HEK293 (cell line): ENCODE measurements at regions of chr2 and their contacts with region 1.

Region 1: DNA sequence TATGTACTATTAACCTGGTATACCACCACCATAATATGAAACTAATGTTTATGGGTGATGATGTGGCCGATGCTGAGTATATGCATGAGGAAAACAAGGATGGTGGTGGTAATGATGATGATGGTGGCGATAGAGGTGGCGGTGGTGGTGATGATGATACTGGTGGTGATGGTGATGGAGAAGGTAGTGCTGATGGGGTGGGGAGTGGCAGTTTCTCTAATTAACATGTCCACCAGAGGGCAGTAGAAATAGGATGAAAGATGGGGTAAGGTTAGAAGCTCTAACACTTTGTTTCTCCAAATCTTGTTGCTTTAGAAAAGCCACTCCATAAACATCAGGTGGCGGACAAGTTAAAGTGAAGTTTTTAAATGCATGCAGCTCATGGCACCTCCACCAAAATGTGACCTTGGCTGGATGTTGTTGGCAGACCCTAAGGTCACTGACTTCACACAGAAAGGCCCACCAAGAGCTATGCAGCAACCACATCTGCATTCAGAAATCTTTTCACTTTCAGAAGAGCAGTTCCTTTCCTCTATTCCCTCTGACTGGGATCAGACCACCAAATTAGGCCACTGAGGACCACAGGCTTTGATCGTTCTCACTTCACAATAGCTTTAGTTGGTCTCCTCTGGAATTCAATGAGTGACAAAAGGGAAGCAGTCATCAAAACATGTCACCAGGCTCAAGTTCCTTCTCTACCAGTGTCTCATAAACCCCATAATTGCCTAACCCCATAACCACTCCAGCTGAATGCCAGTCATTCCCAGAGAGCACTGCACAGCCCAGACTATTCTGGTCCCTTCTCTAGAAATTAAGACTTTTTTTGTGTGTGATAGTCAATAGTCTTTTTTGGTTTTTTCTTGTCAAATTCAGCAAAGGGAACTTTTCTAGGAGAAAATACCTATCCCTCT is 7.5 kb upstream of the BCL11A start:
- H3K4me3 ChIP-seq: no peak overlapping the region
- H3K27ac ChIP-seq: no peak overlapping the region
- H3K4me1 ChIP-seq: peaks cover 29% of the 10 kb centered on the region
- CTCF ChIP-seq: peak; percentile 77

Region 2: GRCh38 chr2:60581433-60582282 is 20.7 kb after region 1 on chr2:
- CTCF ChIA-PET with region 1: interaction called, 52 read pairs
- POLR2A ChIA-PET with region 1: no interaction called
- H3K4me3 ChIP-seq: peak overlapping the region; percentile 31
- H3K27ac ChIP-seq: peak overlapping the region; percentile 48; the same call in 1 of the 2 replicates
- H3K4me1 ChIP-seq: peaks cover 6% of the 10 kb centered on the region
- CTCF ChIP-seq: peak; percentile 92